Activated T-helper 1 cell treated with anti-CD3 and anti-CD28 coated beads, Interleukin-12 subunit alpha, Interleukin-12 subunit beta, Interleukin-2, Interleukin-4 antibody, amounts not matched to agents 30 ng/mL and 10 ng/mL and 1 ng/mL, durations not matched to agents 14 hours and 24 hours and 36 hours (primary cell): ENCODE measurements at regions of chr11 and their contacts with region 1.

Region 1: DNA sequence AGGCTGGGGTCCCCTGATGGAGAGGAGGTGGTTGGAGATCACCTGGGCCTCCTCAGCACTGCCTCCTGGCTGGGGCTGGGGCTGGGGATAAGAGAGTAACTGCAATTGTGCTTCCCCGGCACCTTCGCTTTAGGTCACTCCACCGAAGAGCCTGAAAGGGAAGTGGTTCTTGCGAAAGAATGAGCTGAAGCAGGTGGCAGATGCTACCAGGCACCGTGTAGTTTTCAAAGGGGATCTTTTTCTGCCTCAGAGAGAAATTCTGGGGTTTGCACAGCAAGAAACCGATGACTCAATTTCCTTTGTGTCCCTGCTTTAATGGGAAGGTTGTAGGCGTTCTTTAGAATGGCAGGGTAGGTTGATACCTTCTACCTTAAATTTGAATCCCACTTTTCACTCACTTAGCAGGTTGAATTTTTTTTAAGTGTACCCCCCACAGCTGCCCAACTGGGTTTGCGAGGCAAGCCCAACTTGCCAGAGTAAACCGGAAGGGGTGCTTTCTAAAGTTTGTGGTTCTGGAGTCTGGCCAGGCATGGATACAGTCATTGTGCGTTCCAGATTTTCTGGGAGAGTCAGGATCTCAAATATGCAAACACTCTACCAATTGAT is 5.3 kb downstream of the CD44 start:
- DNase-seq: peak; percentile 69
- H3K4me3 Mint-ChIP-seq: peak overlapping the region; percentile 97
- H3K27ac Mint-ChIP-seq: peak overlapping the region; percentile 93
- H3K4me1 Mint-ChIP-seq: peaks cover 84% of the 10 kb centered on the region
- H3K27me3 Mint-ChIP-seq: no peaks in the 10 kb centered on the region

Region 2: GRCh38 chr11:34869426-34869825 is 274.8 kb before region 1 on chr11:
- intact Hi-C with region 1: no loop called
- DNase-seq: no peak
- H3K4me3 Mint-ChIP-seq: no peak overlapping the region
- H3K27ac Mint-ChIP-seq: no peak overlapping the region
- H3K4me1 Mint-ChIP-seq: no peaks in the 10 kb centered on the region
- H3K27me3 Mint-ChIP-seq: peaks cover 2% of the 10 kb centered on the region

Region 3: GRCh38 chr11:35040221-35040942 is 103.9 kb before region 1 on chr11:
- intact Hi-C with region 1: loop called (anchors 1 kb)
- DNase-seq: peak; percentile 70
- H3K4me3 Mint-ChIP-seq: peak overlapping the region; percentile 72
- H3K27ac Mint-ChIP-seq: peak overlapping the region; percentile 93
- H3K4me1 Mint-ChIP-seq: peaks cover 66% of the 10 kb centered on the region
- H3K27me3 Mint-ChIP-seq: peaks cover 2% of the 10 kb centered on the region

Region 4: DNA sequence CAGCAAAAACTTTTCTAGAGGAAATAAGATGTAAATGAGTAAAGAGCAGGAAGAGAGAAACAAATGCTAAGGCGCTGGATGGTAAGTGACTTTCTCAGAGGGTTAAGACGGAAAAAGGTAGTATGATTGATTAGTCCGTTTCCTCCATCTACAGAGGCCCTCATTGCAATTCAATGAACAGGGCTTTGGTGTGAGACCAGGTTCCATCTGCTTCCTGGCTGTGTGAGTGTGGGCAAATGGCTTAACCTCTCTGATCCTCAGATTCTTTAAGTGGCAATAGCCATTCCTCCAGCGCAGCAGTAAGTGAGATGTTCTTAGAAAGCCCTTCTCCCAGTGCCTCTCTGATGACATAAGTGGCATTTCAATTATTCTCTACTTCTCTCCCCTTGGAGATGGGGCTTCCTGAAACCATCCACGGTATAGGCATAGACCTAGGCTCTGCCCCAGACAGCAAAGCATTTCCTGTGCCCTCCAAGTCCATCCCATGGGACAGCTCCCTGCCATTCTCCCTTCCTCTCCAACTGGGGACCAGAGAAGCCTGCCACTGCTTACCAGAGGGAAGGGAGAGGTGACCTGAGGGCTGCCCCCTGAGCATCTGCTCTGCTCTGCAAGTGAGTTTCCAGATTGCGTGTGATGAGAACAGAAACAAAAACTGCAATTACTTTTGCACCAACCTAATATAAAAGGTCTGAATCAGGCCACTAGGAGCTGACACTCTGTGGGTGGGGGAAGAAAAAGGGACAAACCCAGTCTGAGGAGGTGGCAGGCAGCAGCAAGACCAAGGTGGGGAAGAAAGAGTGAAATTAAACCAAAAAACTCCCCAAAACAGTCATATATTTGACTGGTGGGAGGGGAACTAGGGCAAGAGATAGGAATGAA is 18.0 kb before region 1 on chr11:
- intact Hi-C with region 1: loop called (anchors 1 kb)
- DNase-seq: no peak
- H3K4me3 Mint-ChIP-seq: peak overlapping the region; percentile 64
- H3K27ac Mint-ChIP-seq: peak overlapping the region; percentile 84
- H3K4me1 Mint-ChIP-seq: peaks cover 58% of the 10 kb centered on the region
- H3K27me3 Mint-ChIP-seq: no peaks in the 10 kb centered on the region

Region 5: GRCh38 chr11:35173011-35173511 is 28.8 kb after region 1 on chr11:
- intact Hi-C with region 1: loop called (anchors 1 kb)
- DNase-seq: no peak
- H3K4me3 Mint-ChIP-seq: peak overlapping the region; percentile 56
- H3K27ac Mint-ChIP-seq: peak overlapping the region; percentile 75
- H3K4me1 Mint-ChIP-seq: peaks cover 92% of the 10 kb centered on the region
- H3K27me3 Mint-ChIP-seq: no peaks in the 10 kb centered on the region

Region 6: DNA sequence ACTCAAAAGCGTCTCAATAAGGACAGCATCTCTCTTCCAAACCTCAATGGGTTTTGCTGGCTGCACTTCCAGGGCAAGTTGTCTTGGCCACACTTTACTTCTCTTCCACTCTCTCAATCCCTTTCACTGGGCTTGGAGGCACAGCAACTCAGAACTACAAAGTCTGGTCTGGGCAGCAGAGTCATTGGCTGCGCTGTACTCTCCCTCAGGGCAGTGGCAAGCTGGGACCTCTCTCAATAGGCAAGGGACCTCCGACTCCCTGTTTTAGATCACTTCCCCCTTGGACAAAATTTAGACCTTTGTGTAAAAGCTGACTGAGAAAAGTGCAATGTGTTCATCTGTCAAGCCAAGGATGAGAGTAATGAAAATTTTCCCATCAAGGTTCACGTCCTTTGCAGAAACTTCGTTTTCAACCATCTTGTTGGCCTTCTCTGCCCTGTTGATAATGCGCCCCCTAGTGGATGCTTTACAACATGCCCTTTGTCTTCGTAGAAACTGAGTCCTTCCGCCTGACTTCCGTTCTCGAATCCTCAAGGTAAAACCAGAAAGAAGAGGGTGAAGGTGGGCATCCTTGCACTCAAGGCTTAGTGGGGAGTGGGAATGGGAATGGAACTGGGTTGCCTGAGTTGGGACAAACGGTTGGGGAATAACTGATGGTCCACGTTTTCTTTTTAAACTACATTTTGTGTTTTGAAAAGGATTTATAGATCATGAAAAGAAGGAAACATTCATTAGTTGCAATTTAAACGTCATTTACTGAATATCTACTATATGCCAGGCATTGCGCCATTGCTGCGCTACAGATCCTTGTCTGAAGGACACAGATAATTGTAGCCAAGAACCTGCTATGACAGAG is 93.8 kb after region 1 on chr11:
- intact Hi-C with region 1: loop called (anchors 2 kb)
- DNase-seq: peak; percentile 48
- H3K4me3 Mint-ChIP-seq: peak overlapping the region; percentile 42
- H3K27ac Mint-ChIP-seq: peak overlapping the region; percentile 36
- H3K4me1 Mint-ChIP-seq: peaks cover 67% of the 10 kb centered on the region
- H3K27me3 Mint-ChIP-seq: no peaks in the 10 kb centered on the region

Region 7: GRCh38 chr11:35313066-35313759 is 169.0 kb after region 1 on chr11:
- intact Hi-C with region 1: no loop called
- DNase-seq: no peak
- H3K4me3 Mint-ChIP-seq: no peak overlapping the region
- H3K27ac Mint-ChIP-seq: no peak overlapping the region
- H3K4me1 Mint-ChIP-seq: peaks cover 21% of the 10 kb centered on the region
- H3K27me3 Mint-ChIP-seq: peaks cover 4% of the 10 kb centered on the region

Region 8: GRCh38 chr11:35343033-35343598 is 198.9 kb after region 1 on chr11:
- intact Hi-C with region 1: loop called (anchors 1 kb)
- DNase-seq: peak; percentile 65
- H3K4me3 Mint-ChIP-seq: peak overlapping the region; percentile 27
- H3K27ac Mint-ChIP-seq: peak overlapping the region; percentile 79
- H3K4me1 Mint-ChIP-seq: peaks cover 46% of the 10 kb centered on the region
- H3K27me3 Mint-ChIP-seq: peaks cover 9% of the 10 kb centered on the region